IMR-90 (cell line): ENCODE measurements at regions of chr6 and their contacts with region 1.

Region 1: DNA sequence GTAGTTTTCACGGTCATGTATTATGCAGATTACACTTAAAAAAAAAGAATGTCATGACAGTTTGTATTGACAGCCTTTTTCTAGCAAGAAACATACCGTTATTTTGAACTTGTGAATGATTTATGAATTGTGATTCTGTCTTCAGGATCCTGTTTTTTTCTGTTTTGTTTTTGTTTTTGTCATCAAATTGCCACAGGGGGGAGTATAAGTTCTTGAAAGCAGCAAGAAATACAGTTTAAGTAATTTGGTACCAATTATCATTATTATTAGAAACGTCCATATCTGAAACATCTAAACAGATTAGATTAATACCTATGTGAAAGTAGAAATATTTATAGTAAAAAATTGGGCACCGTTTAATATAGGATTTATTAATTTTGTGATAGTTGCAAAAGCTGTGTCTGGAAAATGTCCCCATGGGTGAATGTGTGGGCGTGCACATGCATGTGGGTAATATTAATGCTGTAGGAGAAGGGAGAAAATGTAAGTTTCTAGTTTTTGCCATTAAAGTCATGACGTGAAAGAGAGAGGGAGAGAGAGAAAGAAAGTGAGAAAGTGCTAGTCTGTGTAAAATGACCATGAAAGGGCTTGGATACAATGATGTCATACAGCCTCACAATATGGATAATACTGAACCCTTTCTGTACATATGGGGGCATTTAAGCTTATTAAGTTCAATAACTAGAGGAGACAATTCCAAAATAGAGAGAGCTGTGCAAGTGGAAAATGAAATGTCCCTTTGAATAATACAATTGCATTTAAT is 9.4 kb upstream of the CCN2 start:
- DNase-seq: peak; percentile 47
- ATAC-seq: no peak; the same call in 1 of the 2 replicates
- H3K4me3 ChIP-seq: no peak overlapping the region
- H3K27ac ChIP-seq: no peak overlapping the region
- H3K4me1 ChIP-seq: peaks cover 4% of the 10 kb centered on the region
- H3K27me3 ChIP-seq: no peaks in the 10 kb centered on the region
- CTCF ChIP-seq: peak; percentile 51
- POLR2A ChIP-seq: no peak
- RAD21 ChIP-seq: peak; percentile 50

Region 2: GRCh38 chr6:132063738-132064137 is 103.2 kb after region 1 on chr6:
- CTCF ChIA-PET with region 1: interaction called, 4 read pairs
- POLR2A ChIA-PET with region 1: no interaction called
- dilution Hi-C with region 1: no loop called
- in situ Hi-C with region 1: loop called (anchors 5 kb)
- intact Hi-C with region 1: no loop called
- DNase-seq: peak; percentile 85
- ATAC-seq: peak; percentile 31
- H3K4me3 ChIP-seq: no peak overlapping the region
- H3K27ac ChIP-seq: peak overlapping the region; percentile 81
- H3K4me1 ChIP-seq: peaks cover 11% of the 10 kb centered on the region; the same call in 1 of the 2 replicates
- H3K27me3 ChIP-seq: no peaks in the 10 kb centered on the region
- CTCF ChIP-seq: no peak
- POLR2A ChIP-seq: no peak
- RAD21 ChIP-seq: no peak

Region 3: DNA sequence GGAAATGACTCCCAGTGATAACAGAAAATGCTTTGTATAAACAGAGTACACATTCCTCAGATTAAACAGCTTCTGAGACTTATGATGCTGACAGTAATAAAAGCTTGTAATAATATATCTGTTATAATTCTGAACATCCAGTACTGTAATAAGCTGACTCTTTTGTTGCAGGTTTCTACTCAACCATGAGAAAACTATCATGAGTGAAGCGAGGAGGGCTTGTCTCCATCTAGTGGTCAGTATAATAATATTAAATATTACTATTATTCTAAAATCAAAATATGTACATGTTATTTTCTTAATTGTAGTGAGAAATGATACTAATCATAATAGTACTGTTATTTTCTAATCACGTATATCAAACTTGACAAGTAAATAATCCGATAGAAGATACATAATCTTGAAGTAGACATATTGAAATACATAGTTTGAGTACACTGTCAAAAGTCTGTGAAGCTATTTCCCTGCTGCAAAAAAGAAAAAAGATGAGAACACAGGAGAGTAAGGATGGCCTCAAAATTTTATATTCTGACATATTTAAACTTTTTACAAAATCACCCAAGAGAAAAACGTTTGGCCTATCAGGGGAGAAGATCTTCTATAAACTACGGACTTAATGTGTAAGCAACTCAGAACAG is 257.6 kb after region 1 on chr6:
- CTCF ChIA-PET with region 1: interaction called, 5 read pairs
- POLR2A ChIA-PET with region 1: no interaction called
- dilution Hi-C with region 1: no loop called
- in situ Hi-C with region 1: loop called (anchors 10 kb)
- intact Hi-C with region 1: no loop called
- DNase-seq: peak; percentile 68
- ATAC-seq: peak; percentile 82
- H3K4me3 ChIP-seq: no peak overlapping the region
- H3K27ac ChIP-seq: no peak overlapping the region
- H3K4me1 ChIP-seq: no peaks in the 10 kb centered on the region; the same call in 1 of the 2 replicates
- H3K27me3 ChIP-seq: no peaks in the 10 kb centered on the region
- CTCF ChIP-seq: peak; percentile 66
- POLR2A ChIP-seq: no peak
- RAD21 ChIP-seq: peak; percentile 77

Region 4: GRCh38 chr6:132607544-132608233 is 647.1 kb after region 1 on chr6:
- CTCF ChIA-PET with region 1: no interaction called
- POLR2A ChIA-PET with region 1: no interaction called
- dilution Hi-C with region 1: no loop called
- in situ Hi-C with region 1: no loop called
- intact Hi-C with region 1: no loop called
- DNase-seq: no peak
- ATAC-seq: no peak
- H3K4me3 ChIP-seq: no peak overlapping the region
- H3K27ac ChIP-seq: no peak overlapping the region
- H3K4me1 ChIP-seq: no peaks in the 10 kb centered on the region
- H3K27me3 ChIP-seq: peaks cover 22% of the 10 kb centered on the region
- CTCF ChIP-seq: no peak
- POLR2A ChIP-seq: no peak
- RAD21 ChIP-seq: no peak